Aorta (tissue), 5 donors: ENCODE measurements at regions of chr2 and their contacts with region 1.

Region 1: DNA sequence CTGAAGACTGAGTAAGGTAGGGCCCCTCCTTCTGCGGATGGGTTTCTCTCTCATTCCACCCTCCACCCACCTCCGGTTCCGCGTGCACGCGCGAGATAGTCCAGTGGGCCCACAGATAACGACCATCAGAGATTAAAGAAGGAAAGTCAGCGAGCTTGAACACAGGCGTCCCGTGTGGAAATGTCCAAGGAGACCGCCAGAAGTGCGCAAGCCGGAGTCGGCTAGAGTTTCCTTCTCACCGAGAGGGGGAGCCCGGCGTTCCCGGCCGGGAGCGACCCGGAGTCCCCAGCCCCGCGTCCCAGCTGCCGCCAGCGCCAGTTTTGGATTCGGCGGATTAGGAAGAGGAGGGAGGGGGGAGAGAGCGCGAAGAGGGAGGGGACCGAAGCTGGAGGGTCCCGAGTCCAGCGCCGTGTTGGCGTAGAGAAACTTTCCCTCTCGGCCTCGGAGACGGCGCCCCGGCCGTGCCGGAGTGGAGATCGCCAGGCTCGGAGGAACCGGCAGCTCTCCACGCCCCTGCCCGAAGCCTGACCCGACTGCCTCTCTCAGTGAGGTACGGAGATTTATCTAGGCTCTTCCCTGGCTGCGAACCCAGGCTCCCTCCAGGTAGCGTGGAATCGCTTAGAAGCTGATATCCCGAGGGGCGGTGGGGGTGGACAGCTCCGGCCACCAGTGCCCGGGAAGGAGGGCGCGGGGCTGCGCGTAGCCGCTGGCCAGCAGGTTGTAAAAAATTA is at the start of gene GULP1:
- DNase-seq: peak; percentile 83 to 92
- ATAC-seq: peak; percentile 91
- H3K4me3 ChIP-seq: peak within 1 kb of the TSS; percentile 20 to 81
- H3K27ac ChIP-seq: peak within 1 kb of the TSS; percentile 89 to 95
- H3K4me1 ChIP-seq: peaks cover 0 to 2% of the 10 kb centered on the region in 2 donors
- H3K27me3 ChIP-seq: no peaks in the 10 kb centered on the region
- total RNA-seq, gene GULP1: 68.8 to 74.8 TPM

Region 2: DNA sequence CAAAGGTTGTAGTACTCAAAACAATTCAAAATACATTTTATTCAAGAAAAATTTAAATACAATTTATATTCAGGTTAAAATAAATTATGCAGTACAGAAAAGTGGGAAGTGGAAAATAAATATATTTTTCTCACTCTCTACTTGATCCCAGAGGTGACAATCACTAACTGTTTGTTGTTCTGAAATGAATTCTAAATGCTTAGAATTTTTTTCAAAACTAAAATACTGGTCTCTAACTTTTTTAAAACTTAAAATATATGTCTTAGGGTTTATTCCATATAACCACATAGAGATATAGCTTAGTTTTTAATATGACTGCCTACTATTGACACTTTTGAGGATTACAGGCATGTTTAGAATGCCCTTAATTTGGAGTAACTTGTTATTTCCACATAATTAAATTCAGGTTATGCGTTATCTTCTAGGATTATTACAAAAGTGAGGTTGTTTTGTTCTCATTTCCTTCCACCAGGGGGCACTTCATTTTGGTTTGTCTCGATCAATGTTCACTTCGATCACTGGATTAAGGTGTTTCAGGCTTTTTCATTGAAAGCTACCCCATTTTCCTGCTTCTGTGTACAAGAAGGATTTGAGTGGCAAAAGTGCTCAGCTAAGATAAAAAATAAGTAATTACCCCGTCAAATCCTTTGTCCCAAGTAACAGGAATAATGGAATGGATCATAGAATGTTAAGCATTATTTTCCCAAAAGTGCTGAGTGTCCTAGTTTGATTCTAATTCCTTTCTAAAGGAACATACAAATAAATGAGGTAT is 710.5 kb before region 1 on chr2:
- intact Hi-C with region 1: loop called in 1 of 2 experiments (anchors 10 kb)
- DNase-seq: no peak
- ATAC-seq: peak; percentile 59
- H3K4me3 ChIP-seq: peak overlapping the region; percentile 31 to 90
- H3K27ac ChIP-seq: no peak overlapping the region
- H3K4me1 ChIP-seq: peaks cover 0 to 2% of the 10 kb centered on the region in 2 donors
- H3K27me3 ChIP-seq: no peaks in the 10 kb centered on the region

Region 3: DNA sequence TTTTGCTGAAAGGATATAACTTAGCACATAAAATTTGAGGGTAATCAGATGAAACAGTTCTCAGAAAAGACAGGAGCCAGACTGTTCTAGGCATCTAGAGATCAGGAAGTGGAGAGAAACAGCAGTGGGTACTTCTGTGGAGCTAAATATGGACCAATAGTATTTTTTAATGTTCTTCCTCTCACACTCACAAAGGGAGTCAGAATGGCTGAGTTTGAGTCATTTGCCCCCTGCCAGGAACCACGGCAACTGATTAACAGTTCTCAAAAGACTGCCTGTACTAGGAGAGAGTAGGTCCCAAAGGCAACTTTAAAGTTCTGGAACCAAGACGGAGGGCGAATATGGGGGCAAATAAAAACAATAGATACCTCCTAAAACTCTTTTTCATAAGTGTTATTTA is 107.4 kb after region 1 on chr2:
- intact Hi-C with region 1: no loop called
- DNase-seq: no peak
- ATAC-seq: no peak
- H3K4me3 ChIP-seq: no peak overlapping the region
- H3K27ac ChIP-seq: no peak overlapping the region
- H3K4me1 ChIP-seq: no peaks in the 10 kb centered on the region
- H3K27me3 ChIP-seq: no peaks in the 10 kb centered on the region

Region 4: GRCh38 chr2:188425266-188425665 is 133.5 kb after region 1 on chr2:
- intact Hi-C with region 1: loop called in 1 of 2 experiments (anchors 10 kb)
- DNase-seq: no peak
- ATAC-seq: no peak
- H3K4me3 ChIP-seq: no peak overlapping the region
- H3K27ac ChIP-seq: no peak overlapping the region
- H3K4me1 ChIP-seq: no peaks in the 10 kb centered on the region
- H3K27me3 ChIP-seq: no peaks in the 10 kb centered on the region

Region 5: DNA sequence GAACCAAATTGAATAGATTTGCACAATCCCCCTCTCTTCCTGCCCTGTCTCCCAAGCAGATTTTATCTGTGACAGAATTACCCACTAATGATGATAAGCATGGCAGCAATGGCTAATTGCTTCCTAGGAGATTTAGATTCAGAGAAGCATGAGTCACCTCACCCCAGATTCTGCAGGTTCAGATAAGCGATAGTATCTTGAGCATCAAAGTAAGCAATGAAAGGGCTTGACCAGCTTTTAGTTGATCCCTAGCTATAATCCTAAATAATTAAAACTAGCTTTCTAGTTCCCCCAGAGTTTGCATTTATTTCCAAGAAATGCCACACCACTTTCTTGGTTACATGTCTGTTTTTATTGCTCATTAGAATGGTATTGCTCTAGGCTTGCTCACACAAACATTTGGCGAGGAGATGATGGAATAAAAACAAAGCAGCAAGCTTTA is 204.2 kb after region 1 on chr2:
- intact Hi-C with region 1: loop called in 1 of 2 experiments (anchors 5 kb)
- DNase-seq: no peak
- ATAC-seq: no peak
- H3K4me3 ChIP-seq: no peak overlapping the region
- H3K27ac ChIP-seq: peak overlapping the region in 1 of 2 donors; percentile 59
- H3K4me1 ChIP-seq: peaks cover 0 to 2% of the 10 kb centered on the region in 2 donors
- H3K27me3 ChIP-seq: no peaks in the 10 kb centered on the region

Region 6: GRCh38 chr2:188983427-188984064 is 691.8 kb after region 1 on chr2:
- intact Hi-C with region 1: loop called in 1 of 2 experiments (anchors 10 kb)
- DNase-seq: no peak
- ATAC-seq: peak; percentile 47
- H3K4me3 ChIP-seq: no peak overlapping the region
- H3K27ac ChIP-seq: peak overlapping the region in 1 of 2 donors; percentile 63
- H3K4me1 ChIP-seq: no peaks in the 10 kb centered on the region
- H3K27me3 ChIP-seq: no peaks in the 10 kb centered on the region